IMR-90 (cell line): ENCODE measurements at regions of chr5 and their contacts with region 1.

Region 1: DNA sequence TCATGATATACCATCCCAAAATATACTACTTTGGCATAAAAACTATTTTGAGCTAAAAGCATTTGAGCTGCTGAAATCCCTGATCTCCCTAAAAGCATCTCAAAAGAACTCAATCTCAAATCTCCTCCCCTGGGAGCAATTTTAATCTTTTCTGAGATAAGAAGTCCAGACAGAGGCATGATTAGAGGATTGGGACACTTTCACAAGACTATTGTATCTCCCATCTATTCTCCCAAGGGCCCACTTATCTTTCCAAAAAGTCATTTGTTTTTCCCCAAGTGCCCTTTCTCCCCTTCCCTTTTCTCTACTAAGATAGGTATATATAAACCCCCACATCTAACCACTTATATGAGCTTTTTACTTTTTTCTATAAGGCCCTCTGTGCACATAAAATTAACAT is 79.7 kb downstream of the ALDH7A1 start:
- DNase-seq: no peak
- ATAC-seq: no peak
- H3K4me3 ChIP-seq: no peak overlapping the region
- H3K27ac ChIP-seq: no peak overlapping the region
- H3K4me1 ChIP-seq: peaks cover 10% of the 10 kb centered on the region
- H3K27me3 ChIP-seq: no peaks in the 10 kb centered on the region
- CTCF ChIP-seq: no peak
- POLR2A ChIP-seq: no peak
- RAD21 ChIP-seq: no peak

Region 2: DNA sequence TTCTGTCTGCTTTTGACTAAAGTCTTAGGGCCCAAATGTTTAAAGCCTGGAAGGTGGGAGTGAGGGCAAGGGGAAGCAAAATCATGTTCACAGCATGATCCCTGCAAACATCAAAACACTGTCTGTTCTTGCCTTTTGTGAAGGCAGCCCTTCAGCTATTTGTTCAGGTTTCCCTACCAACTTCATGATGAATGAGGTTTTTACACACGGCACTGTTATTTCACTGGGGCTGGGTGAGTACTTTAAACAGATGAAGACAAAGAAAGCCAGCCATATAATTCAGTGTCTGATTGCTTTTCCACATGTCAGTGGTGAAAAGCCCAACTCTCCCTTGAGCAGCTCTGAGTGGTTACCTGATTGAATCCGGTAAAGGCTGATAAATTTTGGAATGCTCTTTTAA is 316.8 kb before region 1 on chr5:
- CTCF ChIA-PET with region 1: no interaction called
- POLR2A ChIA-PET with region 1: no interaction called
- dilution Hi-C with region 1: no loop called
- in situ Hi-C with region 1: no loop called
- intact Hi-C with region 1: no loop called
- DNase-seq: no peak
- ATAC-seq: no peak
- H3K4me3 ChIP-seq: no peak overlapping the region
- H3K27ac ChIP-seq: no peak overlapping the region
- H3K4me1 ChIP-seq: peaks cover 2% of the 10 kb centered on the region; the same call in 1 of the 2 replicates
- H3K27me3 ChIP-seq: no peaks in the 10 kb centered on the region
- CTCF ChIP-seq: no peak
- POLR2A ChIP-seq: no peak
- RAD21 ChIP-seq: no peak

Region 3: DNA sequence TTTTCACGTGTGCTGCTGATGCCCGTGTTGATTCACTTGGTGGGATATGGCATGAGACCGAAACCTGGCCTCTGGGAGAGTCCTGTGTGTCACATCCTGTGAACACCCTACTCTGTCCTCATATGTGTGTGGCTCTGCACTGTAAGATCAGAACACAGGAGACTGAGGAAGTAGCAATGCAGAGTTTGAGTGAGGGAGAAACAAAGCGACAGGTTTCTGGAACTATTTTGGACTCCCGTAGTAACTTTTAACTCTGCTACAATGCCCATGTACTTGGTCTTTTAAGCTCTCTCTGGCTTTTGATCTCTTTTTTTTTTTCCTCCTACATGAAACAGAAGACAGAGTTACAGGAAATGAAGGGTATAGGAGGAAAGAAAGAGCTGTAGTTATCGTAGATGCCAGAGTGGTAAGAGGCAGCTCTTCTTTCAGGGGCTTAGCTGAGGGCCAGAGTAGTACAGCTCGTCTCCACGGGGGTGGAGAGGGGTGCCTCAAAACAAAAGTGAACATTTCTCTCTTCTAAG is 65.5 kb before region 1 on chr5:
- CTCF ChIA-PET with region 1: no interaction called
- POLR2A ChIA-PET with region 1: no interaction called
- dilution Hi-C with region 1: no loop called
- in situ Hi-C with region 1: no loop called
- intact Hi-C with region 1: no loop called
- DNase-seq: peak; percentile 77
- ATAC-seq: peak; percentile 27
- H3K4me3 ChIP-seq: no peak overlapping the region
- H3K27ac ChIP-seq: peak overlapping the region; percentile 41
- H3K4me1 ChIP-seq: peaks cover 17% of the 10 kb centered on the region
- H3K27me3 ChIP-seq: no peaks in the 10 kb centered on the region
- CTCF ChIP-seq: no peak
- POLR2A ChIP-seq: peak; percentile 64; the same call in 1 of the 2 replicates
- RAD21 ChIP-seq: 0 out of 2 replicates have a peak, but pooled peaks have one; percentile 5

Region 4: DNA sequence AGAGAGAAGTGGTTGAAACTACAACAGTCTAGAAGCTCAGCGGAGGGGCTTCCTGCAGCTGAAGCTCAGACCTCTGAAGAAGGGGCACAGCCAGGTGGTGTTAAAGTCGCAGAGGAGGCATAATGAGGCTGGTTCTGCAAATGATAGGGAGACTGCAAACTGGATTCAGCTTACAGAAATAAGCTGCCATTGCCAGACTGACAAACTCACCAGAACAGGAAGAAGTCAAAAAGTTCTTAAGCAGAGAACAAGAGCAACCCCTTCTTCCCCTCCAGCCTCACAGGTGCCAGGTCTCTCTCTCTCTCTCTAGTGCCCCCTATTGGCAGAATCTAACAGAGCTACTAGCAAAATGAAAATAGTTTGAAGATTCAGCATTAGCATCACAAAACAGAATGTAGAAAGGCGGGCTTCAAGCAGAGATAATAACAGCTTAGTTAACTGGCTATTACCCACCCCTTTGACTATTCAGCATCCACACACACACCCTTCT is 15.4 kb before region 1 on chr5:
- CTCF ChIA-PET with region 1: interaction called, 10 read pairs
- POLR2A ChIA-PET with region 1: no interaction called
- dilution Hi-C with region 1: no loop called
- in situ Hi-C with region 1: no loop called
- intact Hi-C with region 1: no loop called
- DNase-seq: no peak
- ATAC-seq: no peak
- H3K4me3 ChIP-seq: no peak overlapping the region
- H3K27ac ChIP-seq: no peak overlapping the region
- H3K4me1 ChIP-seq: peaks cover 2% of the 10 kb centered on the region; the same call in 1 of the 2 replicates
- H3K27me3 ChIP-seq: no peaks in the 10 kb centered on the region
- CTCF ChIP-seq: peak; percentile 45
- POLR2A ChIP-seq: no peak
- RAD21 ChIP-seq: peak; percentile 36

Region 5: DNA sequence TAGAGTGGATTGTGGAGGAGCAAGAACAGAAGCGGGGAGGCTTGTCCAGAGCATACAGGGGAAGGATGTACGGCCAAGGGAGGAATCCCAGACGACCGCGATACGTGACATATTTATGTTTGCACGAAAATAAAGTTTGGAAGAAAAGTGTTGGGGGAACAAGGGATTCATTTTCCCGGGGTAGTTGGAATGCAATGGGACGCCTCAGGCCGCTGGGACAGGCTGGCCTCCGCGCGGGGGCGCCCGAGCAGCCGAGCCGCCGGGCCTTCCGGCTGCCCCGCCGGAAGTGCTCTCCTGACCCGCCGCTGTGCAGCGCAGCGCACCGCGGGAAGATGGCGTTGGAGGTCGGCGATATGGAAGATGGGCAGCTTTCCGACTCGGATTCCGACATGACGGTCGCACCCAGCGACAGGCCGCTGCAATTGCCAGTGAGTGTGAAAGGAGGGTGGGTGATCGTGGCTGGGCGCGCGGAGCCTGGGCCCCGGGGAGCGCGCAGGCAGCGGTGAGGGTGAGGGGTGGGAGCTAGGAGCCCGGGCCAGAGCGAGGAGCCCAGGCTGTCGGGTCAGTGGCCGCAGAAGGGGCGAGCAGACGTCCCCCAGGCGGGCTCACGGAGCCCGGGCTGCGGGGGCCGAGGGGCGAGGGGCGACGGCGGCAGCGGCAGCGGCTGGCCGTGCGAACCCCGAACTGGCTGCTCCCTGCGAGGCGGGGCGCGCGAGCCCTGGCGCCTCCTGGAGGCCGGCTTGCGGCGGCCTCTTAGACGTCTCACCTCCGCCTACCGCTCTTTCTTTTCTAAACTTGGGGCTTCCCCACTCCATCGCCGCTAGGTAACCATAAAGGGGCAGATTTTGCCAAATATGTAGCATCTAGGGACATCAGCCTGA is 85.5 kb after region 1 on chr5 and contains the start of gene PHAX:
- CTCF ChIA-PET with region 1: no interaction called
- POLR2A ChIA-PET with region 1: interaction called, 12 read pairs
- dilution Hi-C with region 1: no loop called
- in situ Hi-C with region 1: no loop called
- intact Hi-C with region 1: no loop called
- DNase-seq: peak; percentile 76
- ATAC-seq: peak; percentile 98
- H3K4me3 ChIP-seq: peak within 1 kb of the TSS; percentile 94
- H3K27ac ChIP-seq: peak within 1 kb of the TSS; percentile 94
- H3K4me1 ChIP-seq: peaks cover 4% of the 10 kb centered on the region
- H3K27me3 ChIP-seq: no peaks in the 10 kb centered on the region
- CTCF ChIP-seq: peak; percentile 92
- POLR2A ChIP-seq: peak; percentile 40; the same call in 1 of the 2 replicates
- RAD21 ChIP-seq: peak; percentile 38
- total RNA-seq, gene PHAX: 46.4 and 104 TPM in 2 replicates